ENCODE measurements at regions of chr10 and their contacts with region 1.

Region 1: GRCh38 chr10:89414146-89414878 is at the start of gene IFIT5:
- DNase-seq: peak; percentile 79
- H3K4me3 Mint-ChIP-seq: peak within 1 kb of the TSS; percentile 79
- H3K27ac Mint-ChIP-seq: peak within 1 kb of the TSS; percentile 95
- H3K4me1 Mint-ChIP-seq: peaks cover 61% of the 10 kb centered on the region
- H3K27me3 Mint-ChIP-seq: no peaks in the 10 kb centered on the region
- total RNA-seq, gene IFIT5: 39.6 to 46.3 TPM

Region 2: DNA sequence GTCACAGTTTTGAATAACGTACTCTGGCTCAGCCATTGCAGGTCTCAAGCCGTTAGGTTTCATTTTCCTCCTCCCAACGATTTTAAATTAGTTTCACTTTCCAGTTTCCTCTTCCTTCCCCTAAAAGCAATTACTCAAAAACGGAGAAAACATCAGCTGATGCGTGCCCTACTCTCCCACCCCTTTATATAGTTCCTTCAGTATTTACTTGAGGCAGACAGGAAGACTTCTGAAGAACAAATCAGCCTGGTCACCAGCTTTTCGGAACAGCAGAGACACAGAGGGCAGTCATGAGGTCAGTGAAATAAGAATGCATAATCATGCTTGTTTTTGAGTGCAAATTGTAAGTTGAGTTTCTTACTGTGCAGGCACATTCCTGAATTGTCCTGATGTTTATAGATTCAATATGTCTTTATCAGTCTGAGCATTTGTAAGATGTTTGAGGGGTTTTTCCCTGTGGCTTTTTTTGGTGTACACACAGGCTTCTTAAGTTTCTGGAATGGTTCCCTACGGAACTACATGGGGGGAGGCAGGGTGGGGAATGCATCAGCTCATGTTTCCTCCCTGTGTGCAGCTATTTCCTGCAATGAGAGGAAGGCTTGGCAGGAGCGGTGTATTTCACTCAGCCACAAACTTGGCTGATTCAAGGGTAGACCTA is 86.4 kb before region 1 on chr10 and contains the start of gene IFIT3:
- CTCF ChIA-PET with region 1: no interaction called
- POLR2A ChIA-PET with region 1: interaction called, 13 read pairs
- DNase-seq: peak; percentile 42
- H3K4me3 Mint-ChIP-seq: peak within 1 kb of the TSS; percentile 82
- H3K27ac Mint-ChIP-seq: peak within 1 kb of the TSS; percentile 86
- H3K4me1 Mint-ChIP-seq: peaks cover 61% of the 10 kb centered on the region
- H3K27me3 Mint-ChIP-seq: peaks cover 3% of the 10 kb centered on the region
- total RNA-seq, gene IFIT3: 51.1 to 55.4 TPM

Region 3: GRCh38 chr10:89377705-89378637 is 36.3 kb before region 1 on chr10 and contains the start of gene IFIT1B:
- CTCF ChIA-PET with region 1: no interaction called
- POLR2A ChIA-PET with region 1: no interaction called
- DNase-seq: no peak
- H3K4me3 Mint-ChIP-seq: no peak within 1 kb of the TSS
- H3K27ac Mint-ChIP-seq: no peak within 1 kb of the TSS
- H3K4me1 Mint-ChIP-seq: peaks cover under 1% of the 10 kb centered on the region
- H3K27me3 Mint-ChIP-seq: peaks cover 4% of the 10 kb centered on the region
- total RNA-seq, gene IFIT1B: not detected

Region 4: GRCh38 chr10:89391917-89392756 is 22.2 kb before region 1 on chr10 and contains the start of gene IFIT1:
- CTCF ChIA-PET with region 1: interaction called, 3 read pairs
- POLR2A ChIA-PET with region 1: interaction called, 14 read pairs
- DNase-seq: peak; percentile 81
- H3K4me3 Mint-ChIP-seq: peak within 1 kb of the TSS; percentile 86
- H3K27ac Mint-ChIP-seq: peak within 1 kb of the TSS; percentile 95
- H3K4me1 Mint-ChIP-seq: peaks cover 47% of the 10 kb centered on the region
- H3K27me3 Mint-ChIP-seq: no peaks in the 10 kb centered on the region
- total RNA-seq, gene IFIT1: 42.9 to 45.0 TPM

Region 5: GRCh38 chr10:89701238-89702120 is 287.2 kb after region 1 on chr10 and contains the start of gene KIF20B:
- CTCF ChIA-PET with region 1: no interaction called
- POLR2A ChIA-PET with region 1: interaction called, 10 read pairs
- DNase-seq: peak; percentile 97
- H3K4me3 Mint-ChIP-seq: peak within 1 kb of the TSS; percentile 98
- H3K27ac Mint-ChIP-seq: peak within 1 kb of the TSS; percentile 99
- H3K4me1 Mint-ChIP-seq: peaks cover 50% of the 10 kb centered on the region
- H3K27me3 Mint-ChIP-seq: no peaks in the 10 kb centered on the region
- total RNA-seq, gene KIF20B: 66.4 to 85.7 TPM

Measured in activated CD4-positive, alpha-beta T cell treated with anti-CD3 and anti-CD28 coated beads, Interleukin-2, amount 10 ng/mL, durations not matched to agents 7 days and 5 days (primary cell).